Activated T-helper 1 cell treated with anti-CD3 and anti-CD28 coated beads, Interleukin-12 subunit alpha, Interleukin-12 subunit beta, Interleukin-2, Interleukin-4 antibody, amounts not matched to agents 30 ng/mL and 10 ng/mL and 1 ng/mL, durations not matched to agents 14 hours and 24 hours and 36 hours (primary cell): ENCODE measurements at regions of chr12 and their contacts with region 1.

Region 1: GRCh38 chr12:8493084-8493483 is 20.2 kb upstream of the CLEC4D start:
- DNase-seq: peak; percentile 42
- H3K4me3 Mint-ChIP-seq: no peak overlapping the region
- H3K27ac Mint-ChIP-seq: peak overlapping the region; percentile 24
- H3K4me1 Mint-ChIP-seq: peaks cover 23% of the 10 kb centered on the region
- H3K27me3 Mint-ChIP-seq: peaks cover 18% of the 10 kb centered on the region

Region 2: DNA sequence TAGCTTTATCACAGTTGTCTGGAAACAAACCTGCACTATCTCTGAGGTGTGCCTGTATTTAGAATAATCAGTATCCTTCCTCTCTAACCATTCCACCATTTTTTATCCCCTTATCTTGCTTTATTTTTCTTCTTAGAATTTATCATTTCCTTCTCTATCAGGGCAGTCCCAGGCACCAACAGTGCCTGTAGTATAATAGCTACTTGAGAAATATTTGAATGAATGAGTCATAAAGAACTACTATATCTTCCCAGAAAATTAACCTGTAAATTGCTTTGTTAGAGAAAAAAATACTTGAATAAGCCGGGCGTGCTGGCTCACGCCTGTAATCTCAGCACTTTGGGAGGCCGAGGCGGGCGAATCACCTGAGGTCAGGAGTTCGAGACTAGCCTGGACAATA is 481.8 kb before region 1 on chr12:
- intact Hi-C with region 1: no loop called
- DNase-seq: no peak
- H3K4me3 Mint-ChIP-seq: no peak overlapping the region
- H3K27ac Mint-ChIP-seq: no peak overlapping the region
- H3K4me1 Mint-ChIP-seq: no peaks in the 10 kb centered on the region
- H3K27me3 Mint-ChIP-seq: peaks cover 31% of the 10 kb centered on the region

Region 3: DNA sequence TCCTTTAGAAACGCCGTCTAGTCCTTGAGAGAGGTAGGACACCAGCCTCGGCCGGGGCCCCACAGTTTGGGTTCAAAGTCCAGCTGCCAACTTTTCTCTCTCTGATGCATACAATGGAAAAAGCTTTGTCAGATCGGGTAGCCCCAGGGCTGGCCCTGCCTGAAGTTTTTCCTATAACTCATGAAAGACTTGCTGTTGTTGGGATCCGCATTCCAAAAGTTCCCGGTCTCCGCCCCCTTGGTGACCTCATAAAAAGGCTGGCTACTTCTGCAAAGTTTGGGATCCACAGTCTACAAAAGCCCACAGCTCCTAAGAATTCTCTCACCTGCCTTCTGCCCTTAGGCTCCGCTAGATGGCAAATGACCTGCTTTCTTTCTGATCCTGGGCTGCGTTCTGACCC is 72.6 kb before region 1 on chr12:
- intact Hi-C with region 1: no loop called
- DNase-seq: no peak
- H3K4me3 Mint-ChIP-seq: no peak overlapping the region
- H3K27ac Mint-ChIP-seq: no peak overlapping the region
- H3K4me1 Mint-ChIP-seq: no peaks in the 10 kb centered on the region
- H3K27me3 Mint-ChIP-seq: no peaks in the 10 kb centered on the region

Region 4: DNA sequence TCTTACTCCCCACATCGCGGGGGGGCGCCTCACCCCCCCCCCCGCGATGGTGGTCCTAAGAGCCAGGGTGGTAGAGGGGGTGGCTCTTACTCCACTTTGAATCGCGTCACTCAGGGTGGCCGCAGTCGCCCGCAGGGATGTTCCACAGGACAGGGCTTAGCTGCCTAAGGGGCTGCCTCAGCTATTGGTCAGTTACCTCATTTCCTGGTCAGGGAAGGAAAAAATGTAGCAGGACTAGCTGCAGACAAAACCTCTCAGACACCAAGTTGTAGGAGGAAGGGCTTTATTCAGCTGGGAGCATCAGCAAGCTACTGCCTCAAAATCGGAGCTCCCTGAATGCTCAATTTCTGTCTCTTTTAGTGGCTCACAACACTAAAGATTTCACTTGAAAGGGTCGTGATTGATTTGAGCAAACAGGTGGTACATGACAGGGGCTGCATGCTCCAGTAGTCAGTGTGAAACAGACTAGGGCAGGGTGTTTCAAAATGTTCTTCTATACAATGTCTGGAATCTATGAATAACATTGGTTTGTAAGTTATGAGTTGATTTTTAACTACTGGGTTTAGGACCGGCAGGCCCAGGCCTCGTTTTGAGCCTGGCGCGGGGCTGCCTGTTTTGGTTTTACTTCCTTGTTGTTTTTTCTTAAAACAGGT is 43.7 kb before region 1 on chr12:
- intact Hi-C with region 1: loop called (anchors 1 kb)
- DNase-seq: no peak
- H3K4me3 Mint-ChIP-seq: no peak overlapping the region
- H3K27ac Mint-ChIP-seq: no peak overlapping the region
- H3K4me1 Mint-ChIP-seq: no peaks in the 10 kb centered on the region
- H3K27me3 Mint-ChIP-seq: peaks cover 13% of the 10 kb centered on the region

Region 5: DNA sequence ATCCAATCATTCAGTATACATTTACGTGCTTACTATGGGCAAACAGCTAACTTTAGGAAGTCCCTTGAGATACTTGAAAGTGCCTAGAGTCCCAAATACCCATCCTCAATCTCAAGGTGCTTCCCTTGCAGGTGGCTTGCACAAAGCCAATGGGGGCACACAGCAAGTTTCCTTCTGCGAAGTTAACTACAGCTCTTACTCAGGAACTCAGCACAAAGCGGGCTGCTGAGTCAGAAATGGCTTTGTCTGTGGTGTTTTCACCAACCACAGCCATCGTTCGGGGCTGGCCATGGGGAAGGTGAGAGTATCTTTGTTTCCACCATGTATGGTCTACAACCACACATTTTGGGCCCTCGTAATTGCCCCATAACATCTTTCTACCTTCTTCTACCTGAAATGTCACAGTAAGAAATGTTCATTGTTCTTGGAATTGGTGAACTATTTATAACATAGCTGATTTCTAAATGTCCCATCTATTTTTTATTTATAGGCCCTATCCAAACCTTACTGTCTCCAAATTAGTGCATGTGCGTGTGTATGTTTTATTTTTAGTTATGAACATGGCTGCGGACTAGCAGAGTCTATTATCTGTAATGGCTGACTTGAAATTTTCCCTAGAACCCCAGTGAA is 155.6 kb after region 1 on chr12:
- intact Hi-C with region 1: loop called (anchors 2 kb)
- DNase-seq: peak; percentile 67
- H3K4me3 Mint-ChIP-seq: no peak overlapping the region
- H3K27ac Mint-ChIP-seq: peak overlapping the region; percentile 54
- H3K4me1 Mint-ChIP-seq: peaks cover 45% of the 10 kb centered on the region
- H3K27me3 Mint-ChIP-seq: peaks cover 53% of the 10 kb centered on the region

Region 6: GRCh38 chr12:8912914-8913313 is 419.8 kb after region 1 on chr12:
- intact Hi-C with region 1: no loop called
- DNase-seq: no peak
- H3K4me3 Mint-ChIP-seq: peak overlapping the region; percentile 3
- H3K27ac Mint-ChIP-seq: no peak overlapping the region
- H3K4me1 Mint-ChIP-seq: peaks cover 8% of the 10 kb centered on the region
- H3K27me3 Mint-ChIP-seq: peaks cover 18% of the 10 kb centered on the region

Region 7: DNA sequence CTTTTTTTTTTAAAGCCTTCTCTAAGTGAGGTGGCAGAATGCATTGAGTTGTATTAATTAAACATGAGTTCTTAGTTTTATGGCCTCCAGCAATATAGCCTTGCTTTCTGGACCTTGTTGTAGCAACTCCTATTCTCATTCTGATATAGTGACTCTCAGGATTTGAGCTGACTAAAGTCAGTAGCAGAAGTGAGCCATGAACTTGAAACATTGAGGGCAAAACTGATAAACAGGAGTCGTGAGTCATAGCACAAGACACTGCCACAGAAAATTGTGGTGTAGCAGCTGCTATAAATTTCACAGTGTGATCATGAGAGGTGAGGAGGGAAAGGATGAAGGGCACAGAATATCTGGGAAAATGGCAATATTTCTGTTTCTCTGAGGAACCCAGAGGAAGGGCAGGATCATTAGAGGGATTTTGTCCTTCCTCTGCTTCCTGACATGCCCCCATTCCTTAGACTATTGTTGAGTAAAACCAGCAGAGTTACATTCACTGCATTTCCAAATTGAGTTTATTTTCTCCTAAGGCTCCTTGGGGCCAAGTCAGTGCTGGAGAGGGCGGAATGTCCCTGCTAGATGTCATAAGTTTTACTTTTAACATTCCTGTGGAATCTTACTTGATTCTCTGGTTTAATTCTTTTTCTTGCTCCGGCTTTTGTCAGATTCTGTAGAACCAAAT is 503.7 kb after region 1 on chr12:
- intact Hi-C with region 1: loop called (anchors 1 kb)
- DNase-seq: peak; percentile 6
- H3K4me3 Mint-ChIP-seq: no peak overlapping the region
- H3K27ac Mint-ChIP-seq: no peak overlapping the region
- H3K4me1 Mint-ChIP-seq: peaks cover 24% of the 10 kb centered on the region
- H3K27me3 Mint-ChIP-seq: peaks cover 14% of the 10 kb centered on the region

Region 8: GRCh38 chr12:9091891-9092598 is 599.0 kb after region 1 on chr12:
- intact Hi-C with region 1: no loop called
- DNase-seq: no peak
- H3K4me3 Mint-ChIP-seq: no peak overlapping the region
- H3K27ac Mint-ChIP-seq: no peak overlapping the region
- H3K4me1 Mint-ChIP-seq: no peaks in the 10 kb centered on the region
- H3K27me3 Mint-ChIP-seq: no peaks in the 10 kb centered on the region